ENCODE measurements at regions of chr18 and their contacts with region 1.

Region 1: GRCh38 chr18:13381944-13382365 is 163.4 kb downstream of the LDLRAD4 start:
- DNase-seq: peak; percentile 69 to 84
- ATAC-seq: peak; percentile 70 to 90 (median 84)
- H3K4me3 ChIP-seq: peak overlapping the region in 8 of 10 donors; percentile 21 to 46 (median 36)
- H3K27ac ChIP-seq: peak overlapping the region; percentile 74 to 92 (median 82)
- H3K4me1 ChIP-seq: peaks cover 15 to 81% (median 58%) of the 10 kb centered on the region in 9 donors
- H3K27me3 ChIP-seq: no peaks in the 10 kb centered on the region
- CTCF ChIP-seq: no peak

Region 2: DNA sequence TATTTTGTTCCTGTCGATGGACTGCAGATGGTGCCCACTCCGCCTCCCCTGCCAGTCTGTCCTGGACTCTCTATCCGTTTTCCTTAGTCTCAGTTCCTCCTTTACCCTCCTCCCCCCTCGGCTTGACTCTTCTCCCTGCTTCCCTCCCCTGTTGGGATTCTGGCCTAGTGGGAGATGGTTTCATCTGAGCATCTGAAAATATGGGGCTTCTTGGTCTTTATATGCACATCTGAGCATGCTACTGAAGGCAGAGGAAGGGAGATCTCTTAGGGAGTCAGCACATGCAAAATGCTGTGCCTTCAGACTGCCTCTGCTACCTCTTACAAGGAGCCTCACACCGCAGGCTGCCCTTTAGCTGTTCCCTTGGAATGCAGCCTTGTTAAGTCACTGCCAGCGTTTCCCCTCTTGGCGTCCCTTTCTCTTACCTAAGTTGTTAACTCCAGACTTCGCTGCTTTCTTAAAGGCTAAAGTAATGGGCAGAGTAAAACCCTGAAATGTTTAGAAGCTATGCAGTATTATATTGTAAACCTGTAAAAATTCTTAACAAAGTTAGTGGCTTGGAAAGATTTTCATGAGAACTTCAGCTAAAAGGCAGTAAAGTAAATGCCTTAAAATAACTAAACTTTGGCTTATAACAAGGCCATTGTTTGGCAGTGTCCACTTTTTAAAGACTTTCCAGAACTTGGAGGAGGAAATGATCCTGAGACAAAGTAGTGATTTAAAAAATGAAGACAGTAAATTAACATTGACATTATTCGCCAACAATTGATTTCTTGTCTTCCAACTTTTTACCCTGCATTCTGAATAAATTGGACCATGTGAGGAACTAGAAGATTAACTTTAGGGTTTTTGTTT is 113.6 kb before region 1 on chr18:
- intact Hi-C with region 1: loop called in 3 of 10 experiments (anchors 5 to 10 kb)
- DNase-seq: no peak
- ATAC-seq: peak in 1 of 8 donors; percentile 7
- H3K4me3 ChIP-seq: no peak overlapping the region
- H3K27ac ChIP-seq: peak overlapping the region; percentile 10 to 81 (median 66)
- H3K4me1 ChIP-seq: peaks cover 35 to 100% (median 93%) of the 10 kb centered on the region in 9 donors
- H3K27me3 ChIP-seq: no peaks in the 10 kb centered on the region
- CTCF ChIP-seq: no peak

Region 3: GRCh38 chr18:13280070-13280795 is 101.7 kb before region 1 on chr18:
- intact Hi-C with region 1: no loop called
- DNase-seq: peak in 1 of 2 donors; percentile 69
- ATAC-seq: peak; percentile 35 to 93 (median 74)
- H3K4me3 ChIP-seq: no peak overlapping the region
- H3K27ac ChIP-seq: peak overlapping the region in 7 of 10 donors; percentile 14 to 61 (median 48)
- H3K4me1 ChIP-seq: peaks cover 0 to 59% (median 47%) of the 10 kb centered on the region in 9 donors
- H3K27me3 ChIP-seq: no peaks in the 10 kb centered on the region
- CTCF ChIP-seq: no peak

Region 4: GRCh38 chr18:13425462-13426133 is 43.6 kb after region 1 on chr18:
- intact Hi-C with region 1: loop called in 2 of 10 experiments (anchors 5 to 10 kb)
- DNase-seq: no peak
- ATAC-seq: no peak
- H3K4me3 ChIP-seq: no peak overlapping the region
- H3K27ac ChIP-seq: no peak overlapping the region
- H3K4me1 ChIP-seq: peaks cover 14 to 63% (median 28%) of the 10 kb centered on the region in 9 donors
- H3K27me3 ChIP-seq: no peaks in the 10 kb centered on the region
- CTCF ChIP-seq: no peak

Region 5: DNA sequence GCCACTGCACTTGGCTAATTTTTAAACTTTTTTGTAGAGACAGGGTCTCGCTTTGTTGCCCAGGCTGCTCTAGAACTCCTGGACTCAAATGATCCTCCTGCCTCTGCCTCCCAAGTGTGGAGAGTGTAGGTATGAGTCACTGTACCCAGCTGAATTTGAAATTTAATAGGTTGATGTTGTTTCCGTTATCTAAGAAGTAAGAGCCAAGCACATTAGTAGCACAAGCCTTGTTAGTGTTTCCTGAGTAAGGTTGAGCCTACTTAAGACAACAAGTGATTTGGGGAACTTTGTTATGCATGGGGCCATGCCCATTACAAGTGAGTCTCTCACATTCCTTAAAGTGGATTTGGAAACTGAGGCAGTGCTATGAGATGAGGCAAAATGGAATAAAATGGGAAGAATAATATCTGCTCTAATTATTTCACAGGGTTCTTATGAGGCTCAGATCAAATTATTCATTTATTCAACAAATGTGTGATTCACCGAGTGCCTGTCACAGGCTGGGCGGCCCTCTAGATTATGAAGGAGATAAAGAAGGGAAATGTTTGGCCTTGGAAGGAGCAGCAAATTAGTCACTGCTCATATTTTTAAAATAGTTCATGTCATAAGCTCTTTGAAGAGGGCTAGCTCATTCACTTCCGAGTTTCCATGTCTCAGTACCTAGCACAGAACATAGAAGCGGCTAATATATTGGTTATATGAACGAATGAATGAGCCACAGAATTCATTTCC is 53.8 kb after region 1 on chr18:
- intact Hi-C with region 1: loop called in 1 of 10 experiments (anchors 10 kb)
- DNase-seq: no peak
- ATAC-seq: peak in 7 of 8 donors; percentile 35 to 84 (median 63)
- H3K4me3 ChIP-seq: no peak overlapping the region
- H3K27ac ChIP-seq: peak overlapping the region in 7 of 10 donors; percentile 1 to 59 (median 30)
- H3K4me1 ChIP-seq: peaks cover 5 to 46% (median 33%) of the 10 kb centered on the region in 9 donors
- H3K27me3 ChIP-seq: no peaks in the 10 kb centered on the region
- CTCF ChIP-seq: no peak

Region 6: DNA sequence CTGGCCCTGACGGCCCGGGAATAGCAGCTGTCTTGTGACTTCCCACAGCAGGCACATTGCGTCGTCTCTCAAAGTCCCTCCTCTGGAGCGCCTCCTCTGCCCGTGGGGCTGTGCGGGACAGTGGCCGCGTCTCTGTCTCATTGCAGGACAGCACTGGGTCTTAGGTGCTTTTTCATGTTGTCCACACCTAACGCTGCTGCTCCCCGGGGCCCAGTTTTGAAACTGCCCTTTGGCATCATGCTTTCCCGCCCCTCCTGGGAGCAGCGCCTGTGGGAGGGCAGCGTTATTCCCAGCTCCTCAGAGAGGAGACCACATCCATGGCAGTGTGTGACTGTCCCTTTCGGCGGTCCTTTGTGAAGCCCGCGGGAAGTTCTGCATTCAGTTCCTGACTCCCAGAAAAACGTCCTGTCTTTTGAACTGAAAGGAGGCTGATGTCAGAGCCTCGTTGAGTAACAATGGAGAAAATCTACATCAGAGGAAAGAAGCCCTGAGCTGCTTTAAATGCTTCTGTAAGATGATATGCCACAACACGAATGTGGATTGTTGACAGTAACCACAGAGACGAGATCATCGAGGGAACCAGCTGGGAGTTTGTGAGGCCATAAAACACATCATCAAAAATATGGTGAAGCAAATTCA is 118.4 kb after region 1 on chr18:
- intact Hi-C with region 1: loop called in 1 of 10 experiments (anchors 10 kb)
- DNase-seq: peak; percentile 42 to 59
- ATAC-seq: peak; percentile 61 to 90 (median 84)
- H3K4me3 ChIP-seq: peak overlapping the region in 7 of 10 donors; percentile 25 to 41 (median 35)
- H3K27ac ChIP-seq: peak overlapping the region; percentile 53 to 93 (median 83)
- H3K4me1 ChIP-seq: peaks cover 18 to 53% (median 38%) of the 10 kb centered on the region in 9 donors
- H3K27me3 ChIP-seq: no peaks in the 10 kb centered on the region
- CTCF ChIP-seq: peak in 3 of 9 donors; percentile 28 to 39 (median 29)

Region 7: GRCh38 chr18:13520306-13520705 is 138.4 kb after region 1 on chr18:
- intact Hi-C with region 1: loop called in 1 of 10 experiments (anchors 10 kb)
- DNase-seq: peak in 1 of 2 donors; percentile 45
- ATAC-seq: peak in 7 of 8 donors; percentile 65 to 98 (median 86)
- H3K4me3 ChIP-seq: no peak overlapping the region
- H3K27ac ChIP-seq: peak overlapping the region in 8 of 10 donors; percentile 14 to 78 (median 54)
- H3K4me1 ChIP-seq: peaks cover 0 to 32% (median 22%) of the 10 kb centered on the region in 9 donors
- H3K27me3 ChIP-seq: no peaks in the 10 kb centered on the region
- CTCF ChIP-seq: no peak

Region 8: DNA sequence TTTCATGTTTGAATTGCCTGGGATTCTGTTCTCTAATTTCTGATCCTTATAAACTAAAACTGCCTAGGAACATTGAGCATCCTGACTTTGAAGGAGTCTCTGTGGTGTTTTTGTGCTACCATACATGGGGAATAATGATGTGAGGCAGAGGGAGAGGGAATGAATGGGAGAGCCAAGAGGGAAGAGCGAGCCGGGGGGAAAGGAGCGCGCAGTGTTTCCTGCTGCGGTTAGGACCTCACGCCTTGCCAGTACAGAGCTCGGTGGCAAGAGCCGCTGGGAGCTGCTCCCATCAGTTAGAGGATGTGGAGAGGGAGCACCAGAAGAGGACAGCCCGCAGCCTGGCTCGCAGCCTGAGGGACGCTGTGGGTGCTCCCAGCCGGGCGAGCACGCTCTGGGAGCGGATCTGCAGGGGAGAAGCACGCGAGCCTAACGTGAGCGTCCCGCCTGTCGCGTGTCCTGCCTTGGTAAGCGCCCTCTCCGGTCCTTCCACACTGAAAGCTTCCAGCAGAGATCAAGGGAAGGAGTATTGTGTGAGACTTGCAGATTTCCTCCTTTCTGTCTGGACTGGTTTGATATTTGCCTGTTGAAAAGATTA is 229.7 kb after region 1 on chr18:
- intact Hi-C with region 1: loop called in 1 of 10 experiments (anchors 10 kb)
- DNase-seq: peak; percentile 64 to 77
- ATAC-seq: peak; percentile 67 to 90 (median 74)
- H3K4me3 ChIP-seq: peak overlapping the region in 9 of 10 donors; percentile 17 to 54 (median 44)
- H3K27ac ChIP-seq: peak overlapping the region; percentile 68 to 88 (median 84)
- H3K4me1 ChIP-seq: peaks cover 17 to 75% (median 55%) of the 10 kb centered on the region in 9 donors
- H3K27me3 ChIP-seq: no peaks in the 10 kb centered on the region
- CTCF ChIP-seq: no peak

Measured in heart right ventricle (tissue), 16 donors.